ENCODE measurements at regions of chr15 and their contacts with region 1.

Region 1: DNA sequence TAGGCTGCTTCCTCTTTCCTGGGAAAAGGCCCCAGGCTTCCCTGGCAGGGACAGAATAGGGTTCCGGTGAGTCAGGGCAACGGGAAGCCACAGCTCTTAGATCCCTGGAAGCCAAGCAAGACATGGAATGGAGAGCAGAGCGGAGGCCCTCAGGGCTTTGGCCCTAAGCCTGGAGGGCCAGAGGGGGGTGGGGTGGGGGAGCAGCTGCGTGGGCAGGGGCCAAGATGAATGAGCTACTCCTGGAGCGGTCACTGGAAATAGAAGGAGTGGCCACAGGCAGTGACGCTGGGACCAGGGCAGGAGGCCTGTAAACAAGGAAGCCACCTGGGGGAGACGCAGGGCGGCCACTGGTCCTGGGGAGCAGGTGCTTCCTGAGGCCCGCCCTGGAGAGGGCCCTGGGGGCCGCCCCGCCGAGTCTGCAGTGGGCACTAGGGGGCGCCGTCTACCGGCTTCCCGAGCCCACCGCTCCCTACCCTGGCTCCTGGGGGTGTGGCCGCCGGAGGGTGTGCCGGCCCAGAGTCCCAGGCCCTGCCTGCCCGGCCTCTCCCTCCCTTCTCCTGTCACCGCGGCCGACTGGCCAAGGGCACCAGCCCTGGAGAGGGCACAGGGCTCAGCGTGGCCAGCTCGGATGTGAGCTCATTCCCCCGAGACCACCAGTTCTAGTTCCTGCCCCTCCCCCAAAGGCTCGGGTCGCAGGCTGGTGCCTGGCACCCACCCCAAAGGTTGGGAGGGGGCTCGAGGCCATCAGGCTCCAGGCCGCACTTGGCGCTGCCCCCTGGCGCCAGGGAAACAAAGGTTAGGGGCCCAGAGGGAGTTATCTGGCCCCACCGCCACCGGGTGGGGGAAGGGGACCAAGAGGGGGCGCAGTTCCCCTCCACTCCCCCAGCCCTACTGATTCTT is 12.1 kb downstream of the VPS18 start:
- DNase-seq: peak; percentile 83
- H3K4me3 ChIP-seq: peak overlapping the region; percentile 22 to 33
- H3K27ac ChIP-seq: peak overlapping the region; percentile 88 to 89
- H3K4me1 ChIP-seq: peaks cover 22% of the 10 kb centered on the region
- H3K27me3 ChIP-seq: no peaks in the 10 kb centered on the region
- CTCF ChIP-seq: peak; percentile 69 to 96 (median 90)
- POLR2A ChIP-seq: no peak

Region 2: DNA sequence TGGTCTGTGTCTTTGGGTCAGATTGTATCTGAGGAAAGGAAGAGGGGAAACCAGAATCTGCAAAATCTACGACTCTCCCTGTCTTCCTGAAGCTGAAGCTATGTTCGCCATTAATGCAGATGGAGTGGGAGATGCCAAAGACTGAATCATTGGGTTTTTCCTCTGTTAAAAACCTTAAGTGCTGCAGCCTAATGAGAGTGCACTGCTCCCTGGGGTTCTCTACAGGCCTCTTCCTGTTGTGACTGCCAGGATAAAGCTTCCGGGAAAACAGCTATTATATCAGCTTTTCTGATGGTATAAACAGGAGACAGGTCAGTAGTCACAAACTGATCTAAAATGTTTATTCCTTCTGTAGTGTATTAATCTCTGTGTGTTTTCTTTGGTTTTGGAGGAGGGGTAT is 175.3 kb before region 1 on chr15:
- intact Hi-C with region 1: no loop called
- DNase-seq: no peak
- H3K4me3 ChIP-seq: no peak overlapping the region
- H3K27ac ChIP-seq: no peak overlapping the region
- H3K4me1 ChIP-seq: no peaks in the 10 kb centered on the region
- H3K27me3 ChIP-seq: no peaks in the 10 kb centered on the region
- CTCF ChIP-seq: no peak
- POLR2A ChIP-seq: no peak

Region 3: DNA sequence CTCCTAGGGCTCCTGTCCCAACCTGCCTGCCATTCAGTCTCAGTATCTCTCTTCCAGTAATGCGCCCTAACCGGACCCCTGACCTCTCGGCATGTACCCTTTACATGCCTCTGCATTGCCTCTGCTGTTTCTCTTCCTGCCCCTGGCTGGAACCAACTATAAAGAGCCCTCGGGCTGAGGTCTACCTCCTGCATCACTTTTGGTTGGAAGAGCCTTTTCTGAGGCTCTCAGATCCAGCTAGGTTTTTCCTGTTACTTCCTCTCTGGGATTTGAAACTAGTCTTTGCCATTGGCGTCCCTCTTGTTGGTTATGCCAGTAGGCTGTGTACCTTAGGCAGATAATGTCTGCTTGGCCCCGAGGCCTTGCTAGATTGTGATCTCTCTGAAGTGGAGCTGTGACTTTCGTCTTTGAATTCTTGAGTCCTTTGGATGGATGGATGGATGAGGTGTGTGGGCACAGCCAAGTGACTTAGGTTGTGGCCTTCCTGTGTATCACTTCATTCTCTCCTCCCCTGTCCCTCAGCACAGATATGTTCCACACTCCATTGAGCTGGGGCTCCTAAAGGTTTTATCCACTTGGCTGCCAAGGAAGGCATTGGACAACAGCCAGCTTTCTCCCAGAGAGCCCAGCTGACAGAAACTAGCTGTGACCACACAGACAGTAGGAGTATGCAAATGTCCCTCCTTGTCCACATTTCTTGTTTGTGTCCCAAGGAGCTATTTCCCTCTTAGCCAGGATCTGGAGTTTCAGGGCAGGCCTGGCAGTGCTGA is 91.3 kb before region 1 on chr15:
- intact Hi-C with region 1: no loop called
- DNase-seq: peak; percentile 32
- H3K4me3 ChIP-seq: no peak overlapping the region
- H3K27ac ChIP-seq: no peak overlapping the region
- H3K4me1 ChIP-seq: peaks cover 7% of the 10 kb centered on the region
- H3K27me3 ChIP-seq: no peaks in the 10 kb centered on the region
- CTCF ChIP-seq: no peak
- POLR2A ChIP-seq: no peak

Region 4: GRCh38 chr15:40941528-40942336 is 35.4 kb after region 1 on chr15:
- intact Hi-C with region 1: loop called (anchors 5 kb)
- DNase-seq: peak; percentile 45
- H3K4me3 ChIP-seq: peak overlapping the region; percentile 38 to 50
- H3K27ac ChIP-seq: peak overlapping the region; percentile 70 to 74
- H3K4me1 ChIP-seq: peaks cover 7% of the 10 kb centered on the region
- H3K27me3 ChIP-seq: no peaks in the 10 kb centered on the region
- CTCF ChIP-seq: peak; percentile 50 to 92 (median 68)
- POLR2A ChIP-seq: peak; percentile 12

Region 5: GRCh38 chr15:41022487-41023090 is 116.2 kb after region 1 on chr15:
- intact Hi-C with region 1: loop called (anchors 1 kb)
- DNase-seq: no peak
- H3K4me3 ChIP-seq: no peak overlapping the region
- H3K27ac ChIP-seq: no peak overlapping the region
- H3K4me1 ChIP-seq: peaks cover 3% of the 10 kb centered on the region
- H3K27me3 ChIP-seq: no peaks in the 10 kb centered on the region
- CTCF ChIP-seq: peak in 3 of 4 experiments; percentile 15 to 62 (median 58)
- POLR2A ChIP-seq: no peak

Region 6: DNA sequence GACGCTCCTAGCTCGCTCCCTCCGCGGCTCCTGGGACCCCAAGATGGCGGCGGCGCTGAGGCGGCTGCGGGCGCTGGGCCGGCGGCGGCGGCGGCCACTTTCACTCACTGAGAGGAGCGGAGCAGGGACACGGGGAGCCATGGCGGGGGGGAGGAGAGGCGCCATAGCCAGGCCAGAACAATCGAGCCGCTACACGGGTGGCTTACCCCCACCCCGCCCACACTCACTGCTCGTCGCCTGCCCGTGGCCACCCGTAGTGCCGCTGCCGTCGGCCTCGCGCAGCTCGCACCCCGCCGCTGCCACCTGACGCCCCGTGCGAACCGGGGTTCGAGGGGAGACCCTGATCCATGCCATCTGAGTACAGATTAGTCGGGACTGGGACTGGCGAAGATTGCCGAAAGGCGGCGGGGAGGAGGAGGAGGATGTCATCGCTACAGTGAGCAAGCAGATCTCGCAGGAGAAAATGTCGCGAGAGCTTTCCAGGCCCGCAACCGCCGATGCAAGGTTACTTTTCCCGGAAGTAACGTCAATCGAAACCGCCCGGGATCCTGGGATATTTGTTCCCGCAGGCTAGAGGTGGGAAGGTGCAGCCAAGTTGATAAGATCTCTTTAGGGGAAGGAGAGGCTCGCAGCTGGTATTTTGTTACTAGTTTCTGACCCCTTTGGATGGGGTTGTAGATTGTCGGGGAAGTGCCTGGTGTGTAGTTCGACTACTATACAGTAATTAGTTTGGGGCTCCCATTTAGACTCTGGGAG is 210.0 kb after region 1 on chr15 and contains the start of gene INO80:
- intact Hi-C with region 1: loop called (anchors 10 kb)
- DNase-seq: peak; percentile 98
- H3K4me3 ChIP-seq: peak within 1 kb of the TSS; percentile 96 to 98
- H3K27ac ChIP-seq: peak within 1 kb of the TSS; percentile 100
- H3K4me1 ChIP-seq: no peaks in the 10 kb centered on the region
- H3K27me3 ChIP-seq: no peaks in the 10 kb centered on the region
- CTCF ChIP-seq: peak in 1 of 4 experiments; percentile 17
- POLR2A ChIP-seq: peak; percentile 14
- total RNA-seq, gene INO80: 23.0 to 51.2 TPM

Region 7: DNA sequence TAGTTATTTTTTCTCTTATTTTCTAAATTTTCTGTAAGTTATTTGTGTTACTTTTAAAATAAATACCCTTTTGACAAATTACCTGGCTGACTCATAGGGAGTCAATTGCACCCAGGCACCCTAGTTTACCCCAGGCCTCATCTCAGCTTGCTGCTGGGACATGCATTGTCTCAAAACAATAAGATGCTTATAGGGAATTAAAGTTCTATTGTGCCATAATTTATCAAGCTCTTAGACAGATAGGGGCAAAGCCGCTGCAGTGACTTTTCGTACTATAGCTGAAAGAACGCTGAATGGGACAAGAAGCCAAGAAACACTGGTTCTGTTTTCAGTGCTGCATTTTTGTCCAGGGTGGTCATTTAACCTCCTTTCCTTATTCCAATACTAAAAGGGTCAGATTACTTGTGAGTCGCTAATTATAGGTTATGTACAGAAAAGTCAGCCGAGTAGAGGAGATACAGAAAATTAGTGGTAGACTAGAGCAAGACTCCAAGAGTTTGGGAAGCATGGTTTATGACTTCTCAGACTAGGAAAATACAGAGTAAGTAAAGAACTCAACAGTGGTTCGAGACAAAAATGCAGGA is 274.0 kb after region 1 on chr15:
- intact Hi-C with region 1: loop called (anchors 5 kb)
- DNase-seq: no peak
- H3K4me3 ChIP-seq: no peak overlapping the region
- H3K27ac ChIP-seq: no peak overlapping the region
- H3K4me1 ChIP-seq: no peaks in the 10 kb centered on the region
- H3K27me3 ChIP-seq: no peaks in the 10 kb centered on the region
- CTCF ChIP-seq: no peak
- POLR2A ChIP-seq: no peak